Activated naive CD4-positive, alpha-beta T cell treated with anti-CD3 and anti-CD28 coated beads for 36 hours (primary cell): ENCODE measurements at regions of chr18 and their contacts with region 1.

Region 1: GRCh38 chr18:40935423-40935822 is 1019.6 kb upstream of the PIK3C3 start:
- DNase-seq: no peak
- H3K4me3 Mint-ChIP-seq: no peak overlapping the region
- H3K27ac Mint-ChIP-seq: no peak overlapping the region
- H3K4me1 Mint-ChIP-seq: no peaks in the 10 kb centered on the region
- H3K27me3 Mint-ChIP-seq: no peaks in the 10 kb centered on the region

Region 2: DNA sequence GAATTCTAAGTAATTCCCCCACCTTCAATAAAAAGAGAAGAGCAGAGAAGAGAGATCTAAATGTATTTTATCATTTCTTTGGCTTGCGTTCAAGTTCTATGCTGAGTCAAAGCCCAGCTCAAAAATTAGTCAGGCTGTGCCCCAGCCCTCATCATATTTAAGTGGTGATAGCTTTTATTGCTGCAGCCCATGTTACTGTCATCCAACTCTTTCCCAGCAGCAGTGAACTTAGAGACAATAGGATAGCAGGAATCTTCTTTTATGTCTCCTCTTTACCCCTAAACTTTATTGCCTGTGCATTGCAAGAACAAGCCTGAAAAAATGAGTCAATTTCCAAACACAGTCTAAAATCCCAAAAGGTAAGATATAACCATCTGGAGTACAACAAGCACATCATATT is 579.7 kb before region 1 on chr18:
- CTCF ChIA-PET with region 1: no interaction called
- intact Hi-C with region 1: no loop called
- DNase-seq: no peak
- H3K4me3 Mint-ChIP-seq: no peak overlapping the region
- H3K27ac Mint-ChIP-seq: no peak overlapping the region
- H3K4me1 Mint-ChIP-seq: no peaks in the 10 kb centered on the region
- H3K27me3 Mint-ChIP-seq: no peaks in the 10 kb centered on the region

Region 3: DNA sequence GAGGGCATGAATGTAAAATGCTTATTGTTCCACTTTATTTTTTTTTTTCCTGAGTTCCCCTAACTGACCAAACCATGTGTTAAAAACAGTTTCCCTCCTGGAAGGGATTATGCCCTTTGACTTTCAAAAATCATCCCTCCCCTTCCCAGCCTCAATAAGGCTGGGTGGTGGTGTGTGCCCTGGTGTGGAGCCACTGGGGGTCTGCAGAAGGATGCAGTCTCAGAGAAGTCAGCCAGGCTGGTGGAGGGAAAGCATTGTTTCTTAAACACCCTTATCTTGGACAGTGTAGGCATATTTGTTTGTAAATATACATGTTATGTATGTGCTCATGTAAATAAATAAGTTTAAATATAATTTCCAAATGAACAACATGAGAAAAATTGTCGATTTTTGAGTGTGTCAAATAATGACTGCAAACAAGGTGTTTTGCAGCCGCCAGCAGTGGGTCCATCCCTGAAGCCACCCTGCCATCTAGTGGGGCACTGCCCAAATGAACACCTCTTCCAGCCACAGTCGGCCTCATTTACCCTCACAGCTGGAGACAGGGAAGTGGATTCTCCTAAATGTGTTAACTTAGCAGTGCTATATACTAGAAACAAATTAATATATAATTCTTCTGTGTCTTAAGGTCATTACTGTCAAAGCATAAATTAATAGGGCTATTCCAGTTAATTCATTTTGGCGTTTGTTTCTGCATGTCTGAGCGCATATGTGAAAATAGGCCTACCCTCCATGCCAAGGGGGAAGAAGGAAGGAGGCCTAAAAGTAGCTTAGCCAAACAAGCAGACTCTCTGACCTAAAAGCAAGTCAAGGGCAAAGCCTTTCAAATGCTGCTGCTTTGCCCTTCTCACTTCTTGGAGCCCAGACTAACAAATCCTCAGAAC is 810.0 kb after region 1 on chr18:
- CTCF ChIA-PET with region 1: interaction called, 3 read pairs
- intact Hi-C with region 1: loop called (anchors 5 kb)
- DNase-seq: peak; percentile 42
- H3K4me3 Mint-ChIP-seq: no peak overlapping the region
- H3K27ac Mint-ChIP-seq: no peak overlapping the region
- H3K4me1 Mint-ChIP-seq: no peaks in the 10 kb centered on the region
- H3K27me3 Mint-ChIP-seq: no peaks in the 10 kb centered on the region